Left colon (tissue), 2 donors: ENCODE measurements at regions of chr1 and their contacts with region 1.

Region 1: GRCh38 chr1:166479052-166479631 is 312.3 kb upstream of the FAM78B start:
- DNase-seq: peak in 1 of 2 donors; percentile 57
- ATAC-seq: peak; percentile 45

Region 2: DNA sequence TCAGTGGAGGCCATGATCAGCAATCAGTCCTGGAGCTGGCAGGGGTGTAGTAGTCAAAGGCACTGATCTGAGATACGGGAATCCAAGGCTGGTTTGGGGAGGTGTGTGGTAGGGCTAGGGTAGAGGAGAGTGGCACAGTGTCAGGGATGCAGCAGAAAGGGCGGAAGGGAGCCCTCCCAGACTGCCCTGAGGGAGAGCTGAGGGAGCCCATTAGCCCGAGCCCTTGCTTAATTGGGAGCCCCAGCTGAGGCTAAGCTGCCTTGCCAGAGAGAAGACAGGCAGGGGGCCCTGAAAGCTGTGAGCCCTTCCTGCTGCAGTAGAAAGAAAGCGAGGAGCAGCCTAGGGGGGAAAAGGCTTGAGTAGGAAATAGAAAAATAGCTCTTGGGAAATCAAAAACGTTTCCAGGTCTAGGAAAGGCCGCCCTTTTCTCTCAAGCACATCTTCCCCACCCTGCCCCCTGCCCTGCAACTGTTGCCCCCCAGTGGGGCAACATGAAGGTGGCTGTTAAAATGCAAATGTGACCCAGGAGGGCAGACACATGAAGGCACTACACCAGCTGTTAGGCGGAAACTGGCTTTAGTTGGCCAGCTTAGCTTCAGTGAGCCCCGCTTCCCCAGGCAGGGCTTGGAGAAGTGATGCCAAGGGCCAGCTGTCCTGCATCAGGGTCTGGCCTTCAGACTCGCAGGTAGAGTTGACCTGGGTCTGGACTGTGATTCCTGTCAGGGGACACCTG is 545.5 kb before region 1 on chr1:
- intact Hi-C with region 1: loop called in 1 of 2 experiments (anchors 10 kb)
- DNase-seq: no peak
- ATAC-seq: no peak